ENCODE measurements at regions of chr9 and their contacts with region 1.

Region 1: DNA sequence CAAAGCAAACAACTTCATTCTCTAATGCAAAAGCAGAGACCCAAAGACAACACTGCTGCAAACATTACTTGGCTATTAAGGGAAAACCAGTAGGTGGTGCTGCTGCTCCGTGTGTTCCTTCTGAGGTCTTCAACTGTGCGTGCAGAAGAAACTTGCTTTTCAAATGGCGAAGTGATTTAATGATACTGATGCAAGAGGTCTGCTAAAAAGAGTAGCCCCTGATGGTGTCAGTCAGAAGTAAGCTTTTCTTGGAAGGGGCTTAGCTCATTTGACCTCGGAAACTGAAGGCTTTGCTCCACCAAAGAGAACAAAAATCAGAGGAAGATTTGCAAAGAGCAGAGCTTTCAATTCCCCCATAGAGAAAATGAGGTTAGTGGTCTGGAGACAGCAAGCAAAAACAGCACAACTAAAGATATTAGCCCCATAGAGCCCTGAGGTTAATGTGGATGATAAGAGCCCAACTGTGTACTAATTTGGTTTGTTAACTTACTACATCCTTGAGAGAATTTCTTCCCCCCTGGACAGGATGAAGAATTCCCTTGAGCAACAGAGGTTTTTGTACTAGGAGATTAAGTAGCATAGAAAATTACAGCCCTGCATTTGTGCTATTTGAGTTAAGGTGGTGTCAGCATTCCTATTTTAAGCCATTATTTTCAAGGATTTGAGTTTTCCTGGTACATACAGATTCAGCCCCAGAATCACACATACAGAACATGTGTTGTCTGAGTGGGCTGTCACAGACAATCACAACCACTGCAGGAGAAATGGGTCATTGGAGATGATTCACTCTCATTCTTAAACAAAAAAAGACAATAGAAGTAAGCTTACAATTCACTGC is 153.2 kb upstream of the C9orf72 start:
- DNase-seq: peak; percentile 60
- H3K4me3 ChIP-seq: no peak overlapping the region
- H3K27ac ChIP-seq: no peak overlapping the region
- H3K4me1 ChIP-seq: no peaks in the 10 kb centered on the region
- H3K27me3 ChIP-seq: no peaks in the 10 kb centered on the region
- CTCF ChIP-seq: peak; percentile 89 to 94

Region 2: GRCh38 chr9:27673641-27674040 is 52.8 kb before region 1 on chr9:
- CTCF ChIA-PET with region 1: no interaction called
- dilution Hi-C with region 1: no loop called
- in situ Hi-C with region 1: no loop called
- intact Hi-C with region 1: no loop called
- DNase-seq: no peak
- H3K4me3 ChIP-seq: no peak overlapping the region
- H3K27ac ChIP-seq: no peak overlapping the region
- H3K4me1 ChIP-seq: no peaks in the 10 kb centered on the region
- H3K27me3 ChIP-seq: no peaks in the 10 kb centered on the region
- CTCF ChIP-seq: no peak

Region 3: GRCh38 chr9:27785714-27786100 is 59.2 kb after region 1 on chr9:
- CTCF ChIA-PET with region 1: no interaction called
- dilution Hi-C with region 1: no loop called
- in situ Hi-C with region 1: no loop called
- intact Hi-C with region 1: loop called (anchors 1 kb)
- DNase-seq: peak; percentile 81
- H3K4me3 ChIP-seq: peak overlapping the region in 1 of 3 experiments; percentile 22
- H3K27ac ChIP-seq: peak overlapping the region; percentile 95
- H3K4me1 ChIP-seq: peaks cover 16% of the 10 kb centered on the region
- H3K27me3 ChIP-seq: no peaks in the 10 kb centered on the region
- CTCF ChIP-seq: no peak

Region 4: DNA sequence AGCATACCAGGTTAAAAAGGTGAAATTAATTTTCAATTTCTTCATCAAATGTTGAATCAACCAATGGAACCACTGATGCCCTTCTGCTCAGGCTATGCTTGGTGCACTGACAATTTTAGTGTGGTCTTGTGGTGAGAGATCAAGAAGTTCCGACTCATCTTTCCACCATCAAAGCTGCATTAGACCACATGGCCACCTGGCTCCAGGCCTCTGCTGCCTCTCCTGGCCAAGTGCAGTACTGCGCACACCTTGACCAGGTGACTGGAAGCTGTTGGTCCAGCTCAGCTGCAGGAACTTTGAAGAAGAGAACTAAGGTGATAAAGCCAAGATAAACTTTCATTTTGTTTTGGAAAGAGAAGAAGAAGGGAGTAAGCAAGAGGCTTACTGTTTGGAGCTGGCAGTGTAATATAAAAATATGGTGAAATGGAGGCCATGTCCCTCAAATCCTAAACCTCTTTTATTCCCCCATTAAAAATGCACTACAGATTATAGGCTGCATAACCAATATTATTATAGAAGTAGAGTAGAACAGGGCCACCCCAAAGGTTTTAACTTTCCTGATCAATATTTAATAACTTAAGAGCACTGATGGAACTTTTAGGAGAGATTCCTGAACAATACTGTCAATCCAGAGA is 162.3 kb after region 1 on chr9:
- CTCF ChIA-PET with region 1: no interaction called
- dilution Hi-C with region 1: no loop called
- in situ Hi-C with region 1: loop called in 1 of 2 experiments (anchors 25 kb)
- intact Hi-C with region 1: loop called (anchors 1 kb)
- DNase-seq: peak; percentile 35
- H3K4me3 ChIP-seq: no peak overlapping the region
- H3K27ac ChIP-seq: no peak overlapping the region
- H3K4me1 ChIP-seq: no peaks in the 10 kb centered on the region
- H3K27me3 ChIP-seq: peaks cover 4% of the 10 kb centered on the region
- CTCF ChIP-seq: peak; percentile 84 to 98

Region 5: DNA sequence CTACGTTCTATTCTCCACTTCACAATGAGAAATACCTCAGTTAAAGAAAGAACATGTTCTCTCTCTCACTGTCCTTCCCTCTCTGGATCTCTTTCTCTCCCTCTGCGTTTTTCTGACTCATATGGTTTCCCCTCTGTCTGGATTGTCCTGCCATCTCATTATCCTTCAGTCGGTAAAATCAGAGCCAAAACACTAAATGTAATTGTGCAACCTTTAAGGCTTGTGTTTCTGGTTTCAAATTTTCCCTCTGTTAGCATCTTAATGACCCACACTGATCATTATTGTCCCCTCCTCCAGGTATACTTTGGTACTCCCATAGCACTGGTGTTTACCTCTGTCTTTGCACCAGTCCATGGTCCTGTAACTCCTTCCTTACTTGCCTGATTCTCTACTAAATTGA is 356.2 kb after region 1 on chr9:
- CTCF ChIA-PET with region 1: interaction called, 17 read pairs
- dilution Hi-C with region 1: no loop called
- in situ Hi-C with region 1: no loop called
- intact Hi-C with region 1: no loop called
- DNase-seq: peak; percentile 56
- H3K4me3 ChIP-seq: no peak overlapping the region
- H3K27ac ChIP-seq: no peak overlapping the region
- H3K4me1 ChIP-seq: peaks cover 12% of the 10 kb centered on the region
- H3K27me3 ChIP-seq: no peaks in the 10 kb centered on the region
- CTCF ChIP-seq: no peak

Region 6: GRCh38 chr9:29691758-29692407 is 1965.4 kb after region 1 on chr9:
- CTCF ChIA-PET with region 1: no interaction called
- dilution Hi-C with region 1: no loop called
- in situ Hi-C with region 1: no loop called
- intact Hi-C with region 1: loop called (anchors 10 kb)
- DNase-seq: peak; percentile 48
- H3K4me3 ChIP-seq: no peak overlapping the region
- H3K27ac ChIP-seq: no peak overlapping the region
- H3K4me1 ChIP-seq: no peaks in the 10 kb centered on the region
- H3K27me3 ChIP-seq: no peaks in the 10 kb centered on the region
- CTCF ChIP-seq: peak; percentile 44 to 70

Measured in mammary epithelial cell (primary cell).